ENCODE measurements at regions of chr7 and their contacts with region 1.

Region 1: GRCh38 chr7:8125680-8126444 is 136.1 kb downstream of the ICA1 start:
- DNase-seq: peak; percentile 80 to 92 (median 84)
- H3K4me3 ChIP-seq: peak overlapping the region in 1 of 2 donors; percentile 12
- H3K4me3 Mint-ChIP-seq: peak overlapping the region; percentile 46 to 89 (median 78)
- H3K27ac ChIP-seq: peak overlapping the region; percentile 73
- H3K27ac Mint-ChIP-seq: peak overlapping the region; percentile 93 to 100 (median 98)
- H3K4me1 ChIP-seq: peaks cover 94% of the 10 kb centered on the region
- H3K4me1 Mint-ChIP-seq: peaks cover 62 to 94% (median 79%) of the 10 kb centered on the region in 4 donors
- H3K27me3 ChIP-seq: no peaks in the 10 kb centered on the region
- H3K27me3 Mint-ChIP-seq: no peaks in the 10 kb centered on the region

Region 2: GRCh38 chr7:7956531-7957128 is 169.2 kb before region 1 on chr7:
- CTCF ChIA-PET with region 1: no interaction called
- POLR2A ChIA-PET with region 1: no interaction called
- intact Hi-C with region 1: no loop called
- DNase-seq: no peak
- H3K4me3 ChIP-seq: no peak overlapping the region
- H3K4me3 Mint-ChIP-seq: no peak overlapping the region
- H3K27ac ChIP-seq: no peak overlapping the region
- H3K27ac Mint-ChIP-seq: peak overlapping the region in 1 of 7 donors; percentile 71
- H3K4me1 ChIP-seq: no peaks in the 10 kb centered on the region
- H3K4me1 Mint-ChIP-seq: peaks cover 0 to 4% (median 0%) of the 10 kb centered on the region in 4 donors
- H3K27me3 ChIP-seq: no peaks in the 10 kb centered on the region
- H3K27me3 Mint-ChIP-seq: no peaks in the 10 kb centered on the region

Region 3: DNA sequence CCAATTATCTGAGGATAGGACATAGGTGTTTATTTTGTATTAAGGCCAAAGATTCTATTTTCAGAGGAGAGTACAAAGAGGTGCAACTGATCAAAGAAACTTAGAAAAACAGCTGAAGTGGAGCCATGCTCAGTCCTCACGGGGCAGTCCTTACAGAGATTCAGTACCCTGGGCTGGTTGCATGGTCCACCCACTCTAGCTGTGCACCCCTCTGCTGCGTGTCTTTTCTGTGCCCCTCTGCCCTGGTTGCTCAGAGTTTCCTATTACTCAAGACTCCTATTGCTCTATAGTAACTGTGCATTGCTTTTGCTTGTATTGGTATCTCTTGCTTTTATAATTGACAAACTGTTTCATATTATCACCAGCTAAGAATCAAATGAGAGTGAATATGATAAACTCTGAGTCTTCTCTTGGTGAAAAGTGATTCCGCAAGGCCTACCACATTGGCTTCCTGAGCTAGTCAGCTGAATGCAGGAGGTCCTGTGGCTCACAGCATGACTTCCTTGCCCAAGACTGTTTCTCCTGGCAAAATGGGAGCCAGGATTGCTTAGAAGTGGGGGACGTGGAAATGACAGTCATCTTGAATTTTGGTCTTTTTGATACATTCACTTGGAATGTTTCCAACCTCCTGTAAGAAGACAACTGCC is 20.3 kb before region 1 on chr7:
- CTCF ChIA-PET with region 1: interaction called, 6 read pairs
- POLR2A ChIA-PET with region 1: interaction called, 19 read pairs
- intact Hi-C with region 1: no loop called
- DNase-seq: no peak
- H3K4me3 ChIP-seq: no peak overlapping the region
- H3K4me3 Mint-ChIP-seq: peak overlapping the region in 5 of 8 donors; percentile 6 to 52 (median 43)
- H3K27ac ChIP-seq: no peak overlapping the region
- H3K27ac Mint-ChIP-seq: peak overlapping the region; percentile 17 to 93 (median 71)
- H3K4me1 ChIP-seq: peaks cover 20% of the 10 kb centered on the region
- H3K4me1 Mint-ChIP-seq: peaks cover 22 to 37% (median 29%) of the 10 kb centered on the region in 4 donors
- H3K27me3 ChIP-seq: no peaks in the 10 kb centered on the region
- H3K27me3 Mint-ChIP-seq: no peaks in the 10 kb centered on the region

Region 4: GRCh38 chr7:8143151-8143874 is 17.5 kb after region 1 on chr7:
- CTCF ChIA-PET with region 1: interaction called, 14 read pairs
- POLR2A ChIA-PET with region 1: interaction called, 74 read pairs
- intact Hi-C with region 1: no loop called
- DNase-seq: peak in 1 of 5 donors; percentile 40
- H3K4me3 ChIP-seq: peak overlapping the region in 1 of 2 donors; percentile 17
- H3K4me3 Mint-ChIP-seq: peak overlapping the region in 7 of 8 donors; percentile 50 to 69 (median 60)
- H3K27ac ChIP-seq: peak overlapping the region; percentile 54
- H3K27ac Mint-ChIP-seq: peak overlapping the region; percentile 70 to 95 (median 88)
- H3K4me1 ChIP-seq: peaks cover 68% of the 10 kb centered on the region
- H3K4me1 Mint-ChIP-seq: peaks cover 35 to 70% (median 42%) of the 10 kb centered on the region in 4 donors
- H3K27me3 ChIP-seq: no peaks in the 10 kb centered on the region
- H3K27me3 Mint-ChIP-seq: no peaks in the 10 kb centered on the region

Region 5: DNA sequence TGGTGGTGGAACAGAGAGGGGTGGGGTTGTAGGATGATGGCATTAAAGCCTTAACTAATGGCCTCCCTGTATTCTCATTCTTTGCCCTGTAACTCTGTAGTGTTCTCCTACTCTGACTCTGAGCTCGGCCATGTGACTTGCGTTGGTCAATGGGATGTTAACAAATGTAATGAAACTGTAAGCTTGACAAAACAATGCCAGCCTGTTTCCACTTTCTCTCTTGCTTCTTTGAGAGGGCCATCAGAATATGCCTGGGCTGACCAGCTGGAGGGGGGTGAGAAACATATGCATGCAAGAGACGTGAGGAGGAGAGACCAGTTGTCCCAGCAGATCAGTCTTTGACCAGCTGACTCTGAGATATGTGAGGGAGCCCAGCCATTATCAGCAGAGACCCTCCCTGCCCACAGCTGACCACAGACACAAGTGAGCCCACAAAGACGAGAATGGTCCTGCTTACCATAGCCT is 35.5 kb after region 1 on chr7:
- CTCF ChIA-PET with region 1: interaction called, 12 read pairs
- POLR2A ChIA-PET with region 1: no interaction called
- intact Hi-C with region 1: no loop called
- DNase-seq: no peak
- H3K4me3 ChIP-seq: no peak overlapping the region
- H3K4me3 Mint-ChIP-seq: no peak overlapping the region
- H3K27ac ChIP-seq: no peak overlapping the region
- H3K27ac Mint-ChIP-seq: no peak overlapping the region
- H3K4me1 ChIP-seq: no peaks in the 10 kb centered on the region
- H3K4me1 Mint-ChIP-seq: peaks cover 0 to 2% (median under 1%) of the 10 kb centered on the region in 4 donors
- H3K27me3 ChIP-seq: no peaks in the 10 kb centered on the region
- H3K27me3 Mint-ChIP-seq: no peaks in the 10 kb centered on the region

Measured in CD4-positive, alpha-beta memory T cell (primary cell).